ENCODE measurements at regions of chr3 and their contacts with region 1.

Region 1: GRCh38 chr3:57961828-57962447 is 46.3 kb upstream of the FLNB start:
- DNase-seq: peak in 1 of 2 experiments; percentile 82
- ATAC-seq: peak; percentile 69 to 70; a peak in 5 of 6 replicates
- H3K4me3 ChIP-seq: no peak overlapping the region
- H3K27ac ChIP-seq: peak overlapping the region; percentile 81 to 86
- H3K4me1 ChIP-seq: peaks cover 37% of the 10 kb centered on the region
- CTCF ChIP-seq: peak; percentile 71
- EP300 ChIP-seq: no peak
- POLR2A ChIP-seq: no peak
- RAD21 ChIP-seq: peak; percentile 82 to 87

Region 2: DNA sequence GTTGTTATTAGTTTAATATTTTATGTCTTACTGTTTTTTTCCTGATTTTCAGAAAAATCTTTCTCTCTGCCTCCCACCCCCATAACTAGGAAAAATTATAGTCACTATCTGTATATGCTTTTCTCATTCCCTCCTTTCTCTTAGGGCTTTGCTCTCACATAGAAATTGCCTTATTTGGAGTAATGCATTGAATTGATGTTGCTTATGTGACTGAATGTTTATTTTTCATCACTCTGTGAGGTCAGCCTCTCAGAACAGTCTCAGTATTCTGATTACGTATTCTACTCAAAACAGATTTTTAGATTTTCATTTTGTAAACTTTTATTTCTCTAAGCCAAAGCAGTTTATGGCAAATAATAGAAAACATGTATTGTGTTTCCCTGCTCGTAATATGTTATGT is 84.8 kb before region 1 on chr3:
- CTCF ChIA-PET with region 1: no interaction called
- POLR2A ChIA-PET with region 1: no interaction called
- DNase-seq: no peak
- ATAC-seq: no peak
- H3K4me3 ChIP-seq: no peak overlapping the region
- H3K27ac ChIP-seq: no peak overlapping the region
- H3K4me1 ChIP-seq: peaks cover 10% of the 10 kb centered on the region; the same call in 2 of the 3 replicates
- CTCF ChIP-seq: no peak
- EP300 ChIP-seq: no peak
- POLR2A ChIP-seq: no peak
- RAD21 ChIP-seq: no peak

Region 3: GRCh38 chr3:57903124-57903890 is 58.6 kb before region 1 on chr3:
- CTCF ChIA-PET with region 1: no interaction called
- POLR2A ChIA-PET with region 1: no interaction called
- DNase-seq: no peak
- ATAC-seq: no peak
- H3K4me3 ChIP-seq: no peak overlapping the region
- H3K27ac ChIP-seq: no peak overlapping the region
- H3K4me1 ChIP-seq: no peaks in the 10 kb centered on the region
- CTCF ChIP-seq: no peak
- EP300 ChIP-seq: no peak
- POLR2A ChIP-seq: no peak
- RAD21 ChIP-seq: no peak

Region 4: DNA sequence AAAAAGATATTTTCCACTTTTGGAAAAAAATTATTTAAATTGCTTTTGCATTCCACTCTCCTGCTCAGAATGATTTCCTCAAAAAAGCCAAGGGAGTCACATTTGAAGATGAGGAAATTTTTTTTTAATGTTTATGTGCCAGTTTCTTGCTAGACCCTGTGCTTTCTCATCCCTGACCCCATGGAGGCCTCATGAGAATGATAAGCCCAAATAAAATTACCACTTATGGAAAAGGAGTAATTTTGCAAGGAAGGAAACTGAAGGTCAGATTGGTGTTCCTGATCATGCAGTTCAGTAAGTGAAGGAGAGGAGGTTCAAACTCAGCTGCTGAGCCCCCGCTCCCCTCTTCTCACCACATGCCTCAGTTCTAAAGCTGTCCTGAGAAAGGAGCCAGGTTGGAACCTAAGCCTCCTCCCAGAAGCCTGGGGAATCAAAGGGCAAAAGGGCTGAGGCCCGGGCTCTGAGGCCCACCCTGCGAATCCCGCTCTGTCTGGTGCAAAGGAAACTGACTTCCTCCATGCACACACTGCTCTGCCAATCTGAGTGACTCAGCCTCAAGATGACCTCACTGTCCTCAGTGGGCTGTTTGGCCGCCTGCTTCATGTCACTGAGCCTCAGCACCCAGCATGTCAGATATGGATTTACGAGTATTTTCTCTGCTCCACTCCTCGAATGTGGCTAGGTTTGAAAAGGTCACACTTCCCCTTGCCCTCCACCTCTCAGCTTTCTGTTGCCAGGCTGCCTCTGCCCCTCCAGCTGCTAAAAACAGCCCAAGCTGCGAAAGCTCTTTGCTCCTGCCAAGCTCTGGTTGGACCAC is 10.7 kb before region 1 on chr3:
- CTCF ChIA-PET with region 1: interaction called, 18 read pairs
- POLR2A ChIA-PET with region 1: no interaction called
- DNase-seq: peak; percentile 65 to 74
- ATAC-seq: peak; percentile 81 to 85
- H3K4me3 ChIP-seq: no peak overlapping the region
- H3K27ac ChIP-seq: peak overlapping the region; percentile 81 to 95
- H3K4me1 ChIP-seq: peaks cover 40% of the 10 kb centered on the region
- CTCF ChIP-seq: no peak
- EP300 ChIP-seq: no peak
- POLR2A ChIP-seq: no peak
- RAD21 ChIP-seq: no peak

Region 5: DNA sequence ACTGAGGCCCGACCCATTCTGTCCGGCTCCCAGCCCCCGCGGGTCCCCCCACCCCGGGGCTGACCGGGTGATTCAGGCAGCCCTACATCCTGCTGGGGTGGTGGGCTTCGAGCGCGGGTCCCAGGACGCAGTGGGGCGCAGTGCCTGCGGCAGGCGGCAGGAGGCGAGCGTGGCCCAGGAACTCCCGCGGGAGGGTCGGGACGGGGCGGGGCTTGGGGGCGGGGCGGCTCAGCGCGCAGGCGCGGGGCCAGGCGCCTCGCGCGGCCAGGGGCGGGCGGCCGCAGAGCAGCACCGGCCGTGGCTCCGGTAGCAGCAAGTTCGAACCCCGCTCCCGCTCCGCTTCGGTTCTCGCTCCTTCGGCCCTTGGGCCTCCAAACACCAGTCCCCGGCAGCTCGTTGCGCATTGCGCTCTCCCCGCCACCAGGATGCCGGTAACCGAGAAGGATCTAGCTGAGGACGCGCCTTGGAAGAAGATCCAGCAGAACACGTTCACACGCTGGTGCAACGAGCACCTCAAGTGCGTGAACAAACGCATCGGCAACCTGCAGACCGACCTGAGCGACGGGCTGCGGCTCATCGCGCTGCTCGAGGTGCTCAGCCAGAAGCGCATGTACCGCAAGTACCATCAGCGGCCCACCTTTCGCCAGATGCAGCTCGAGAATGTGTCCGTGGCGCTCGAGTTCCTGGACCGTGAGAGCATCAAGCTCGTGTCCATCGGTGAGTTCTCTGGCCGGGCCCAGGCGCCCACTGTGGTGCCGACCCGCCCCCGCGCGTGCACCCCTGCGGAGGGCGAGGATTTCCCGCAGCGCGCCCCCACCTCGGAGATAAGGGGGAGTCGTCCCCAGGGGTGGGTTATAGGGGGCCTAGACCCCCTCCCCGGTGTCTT is 46.4 kb after region 1 on chr3 and contains the start of gene FLNB:
- CTCF ChIA-PET with region 1: interaction called, 22 read pairs
- POLR2A ChIA-PET with region 1: interaction called, 3 read pairs
- DNase-seq: peak; percentile 65 to 79
- ATAC-seq: peak; percentile 64
- H3K4me3 ChIP-seq: peak within 1 kb of the TSS; percentile 99
- H3K27ac ChIP-seq: peak within 1 kb of the TSS; percentile 84 to 97
- H3K4me1 ChIP-seq: peaks cover 38% of the 10 kb centered on the region
- CTCF ChIP-seq: peak; percentile 68
- EP300 ChIP-seq: no peak
- POLR2A ChIP-seq: peak; percentile 93
- RAD21 ChIP-seq: peak; percentile 52 to 85; a peak in 4 of 5 replicates
- polyA plus RNA-seq, gene FLNB: 387 and 439 TPM in 2 replicates

Region 6: GRCh38 chr3:58020783-58021071 is 58.8 kb after region 1 on chr3:
- CTCF ChIA-PET with region 1: interaction called, 22 read pairs
- POLR2A ChIA-PET with region 1: no interaction called
- DNase-seq: no peak
- ATAC-seq: no peak
- H3K4me3 ChIP-seq: no peak overlapping the region
- H3K27ac ChIP-seq: peak overlapping the region; percentile 12 to 83; a peak in 4 of 6 replicates
- H3K4me1 ChIP-seq: peaks cover 100% of the 10 kb centered on the region
- CTCF ChIP-seq: no peak
- EP300 ChIP-seq: no peak
- POLR2A ChIP-seq: no peak
- RAD21 ChIP-seq: no peak

Region 7: DNA sequence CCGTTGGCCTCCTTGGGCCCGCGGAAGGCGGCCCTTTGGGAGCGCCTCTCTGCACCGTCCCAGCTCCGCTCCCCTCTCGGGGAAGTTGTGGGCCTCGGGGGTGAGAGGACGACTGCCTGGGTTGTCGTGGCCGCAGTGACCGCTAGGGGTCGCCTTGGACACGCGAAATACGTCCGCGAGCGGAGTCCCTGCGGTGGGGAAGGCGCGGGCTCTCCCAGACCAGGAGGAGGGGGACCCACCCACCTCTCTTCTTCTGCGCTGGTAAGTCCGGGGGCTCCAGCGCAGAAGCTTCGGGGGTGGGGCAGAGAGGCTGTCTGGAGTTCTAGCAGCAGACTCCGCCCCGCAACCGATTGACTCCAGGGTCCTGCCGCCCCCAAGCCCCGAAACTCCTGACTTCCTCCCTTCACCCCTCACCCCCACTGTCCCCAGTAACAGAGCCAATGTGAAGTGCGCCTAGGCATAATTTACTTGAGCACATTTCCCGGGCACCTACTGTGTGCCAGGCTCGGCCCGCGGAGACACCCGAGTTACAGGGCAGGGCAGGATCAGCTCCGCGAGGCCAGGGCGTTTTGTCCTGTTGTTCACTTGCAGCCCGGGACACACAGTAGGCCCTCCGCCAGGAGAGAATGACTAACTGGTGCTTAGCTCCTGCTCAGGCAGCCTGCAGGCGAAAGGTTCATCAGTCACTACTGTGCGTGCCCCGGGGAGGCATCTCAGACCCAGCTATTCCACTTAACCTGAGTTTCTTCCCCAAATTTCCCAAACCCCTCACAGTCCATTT is 216.0 kb after region 1 on chr3:
- CTCF ChIA-PET with region 1: interaction called, 12 read pairs
- POLR2A ChIA-PET with region 1: no interaction called
- DNase-seq: peak; percentile 69 to 80
- ATAC-seq: peak; percentile 27 to 70
- H3K4me3 ChIP-seq: no peak overlapping the region
- H3K27ac ChIP-seq: peak overlapping the region; percentile 48 to 98
- H3K4me1 ChIP-seq: peaks cover 75% of the 10 kb centered on the region
- CTCF ChIP-seq: peak; percentile 75
- EP300 ChIP-seq: no peak
- POLR2A ChIP-seq: no peak
- RAD21 ChIP-seq: peak; percentile 57 to 62

Region 8: GRCh38 chr3:58507356-58508078 is 545.6 kb after region 1 on chr3:
- CTCF ChIA-PET with region 1: no interaction called
- POLR2A ChIA-PET with region 1: no interaction called
- DNase-seq: no peak
- ATAC-seq: no peak
- H3K4me3 ChIP-seq: no peak overlapping the region
- H3K27ac ChIP-seq: no peak overlapping the region
- H3K4me1 ChIP-seq: no peaks in the 10 kb centered on the region
- CTCF ChIP-seq: no peak
- EP300 ChIP-seq: no peak
- POLR2A ChIP-seq: no peak
- RAD21 ChIP-seq: no peak